Calu3 (cell line): ENCODE measurements at regions of chr2 and their contacts with region 1.

Region 1: DNA sequence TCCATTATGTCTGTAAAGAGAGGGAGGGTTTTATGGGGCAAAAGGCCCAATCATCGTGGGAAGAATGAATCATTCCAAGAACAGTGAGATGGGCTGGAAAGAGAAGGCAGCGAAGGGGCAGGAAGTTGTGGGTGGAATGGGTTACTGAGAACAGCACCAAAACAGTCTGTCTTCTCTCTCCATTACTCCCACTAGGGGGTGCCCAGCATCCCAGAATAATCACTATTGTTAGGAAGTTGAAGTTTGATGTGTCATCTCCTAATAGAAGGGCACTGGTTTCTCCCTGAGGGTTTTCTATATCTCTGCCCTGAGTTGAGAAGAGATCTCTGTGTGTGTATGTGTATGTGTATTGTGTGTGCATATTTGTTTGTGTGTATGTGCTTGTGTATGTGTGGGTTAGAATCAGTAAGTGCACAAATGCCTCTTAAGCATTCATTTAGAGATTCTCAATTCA is 76.6 kb upstream of the MAP4K3 start:
- DNase-seq: peak; percentile 69
- H3K4me3 Mint-ChIP-seq: no peak overlapping the region
- H3K27ac Mint-ChIP-seq: peak overlapping the region; percentile 15
- H3K4me1 Mint-ChIP-seq: peaks cover 39% of the 10 kb centered on the region
- H3K27me3 Mint-ChIP-seq: no peaks in the 10 kb centered on the region
- CTCF ChIP-seq: peak; percentile 68

Region 2: GRCh38 chr2:39593439-39594393 is 80.0 kb after region 1 on chr2:
- CTCF ChIA-PET with region 1: no interaction called
- intact Hi-C with region 1: loop called (anchors 5 kb)
- DNase-seq: peak; percentile 53
- H3K4me3 Mint-ChIP-seq: no peak overlapping the region
- H3K27ac Mint-ChIP-seq: no peak overlapping the region
- H3K4me1 Mint-ChIP-seq: no peaks in the 10 kb centered on the region
- H3K27me3 Mint-ChIP-seq: no peaks in the 10 kb centered on the region
- CTCF ChIP-seq: peak; percentile 46